CD14-positive monocyte (primary cell): ENCODE measurements at regions of chr9 and their contacts with region 1.

Region 1: GRCh38 chr9:116572095-116572748 is 114.9 kb upstream of the TRIM32 start:
- DNase-seq: peak; percentile 51 to 61 (median 53)
- H3K4me3 ChIP-seq: no peak overlapping the region
- H3K4me3 Mint-ChIP-seq: no peak overlapping the region
- H3K27ac ChIP-seq: no peak overlapping the region
- H3K27ac Mint-ChIP-seq: no peak overlapping the region
- H3K4me1 ChIP-seq: no peaks in the 10 kb centered on the region
- H3K4me1 Mint-ChIP-seq: no peaks in the 10 kb centered on the region
- H3K27me3 ChIP-seq: no peaks in the 10 kb centered on the region
- H3K27me3 Mint-ChIP-seq: peaks cover 0 to 2% (median 2%) of the 10 kb centered on the region in 3 donors
- CTCF ChIP-seq: peak; percentile 88

Region 2: DNA sequence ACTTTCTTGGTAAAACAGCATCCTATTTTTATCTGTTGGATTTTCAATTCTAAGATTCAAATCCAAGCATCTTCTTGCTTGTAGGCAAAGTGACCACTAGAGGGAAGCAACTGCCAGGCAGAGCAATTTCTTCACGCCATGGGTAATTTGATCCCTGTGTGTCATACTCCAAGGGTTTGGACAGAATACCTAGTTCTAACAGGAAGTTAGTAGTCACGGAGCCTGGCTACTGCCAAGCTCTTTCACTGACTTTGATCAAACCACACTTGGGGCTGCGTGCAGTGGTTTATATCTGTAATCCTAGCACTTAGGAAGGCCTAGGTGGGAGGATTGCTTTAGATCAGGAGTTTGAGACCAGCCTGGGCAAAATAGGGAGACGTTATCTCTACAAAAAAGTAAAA is 980.6 kb before region 1 on chr9:
- intact Hi-C with region 1: loop called in 1 of 2 experiments (anchors 5 kb)
- DNase-seq: no peak
- H3K4me3 ChIP-seq: no peak overlapping the region
- H3K4me3 Mint-ChIP-seq: no peak overlapping the region
- H3K27ac ChIP-seq: no peak overlapping the region
- H3K27ac Mint-ChIP-seq: peak overlapping the region in 1 of 7 donors; percentile 15
- H3K4me1 ChIP-seq: no peaks in the 10 kb centered on the region
- H3K4me1 Mint-ChIP-seq: no peaks in the 10 kb centered on the region
- H3K27me3 ChIP-seq: no peaks in the 10 kb centered on the region
- H3K27me3 Mint-ChIP-seq: peaks cover 2 to 5% (median 4%) of the 10 kb centered on the region in 3 donors
- CTCF ChIP-seq: peak; percentile 26

Region 3: DNA sequence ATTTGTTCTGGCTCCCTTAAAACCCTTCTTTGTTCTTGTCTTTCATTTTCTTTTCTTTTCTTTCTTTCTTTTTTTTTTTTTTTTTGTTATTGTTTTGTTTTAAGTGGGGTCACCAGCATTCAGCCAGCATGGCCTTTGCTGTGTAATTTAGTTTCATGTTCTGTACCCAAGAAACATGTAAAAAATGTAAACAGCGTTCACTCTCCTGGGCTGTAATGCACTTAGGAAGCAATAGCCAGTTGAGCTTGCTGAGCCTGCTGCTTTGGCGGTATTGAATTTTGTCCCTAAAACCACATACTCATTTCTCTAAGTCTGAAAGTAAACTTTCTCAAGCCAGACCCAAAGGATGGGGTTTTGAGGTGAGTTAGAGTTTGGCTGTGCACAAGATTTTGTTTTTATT is 260.0 kb before region 1 on chr9:
- intact Hi-C with region 1: no loop called
- DNase-seq: no peak
- H3K4me3 ChIP-seq: no peak overlapping the region
- H3K4me3 Mint-ChIP-seq: no peak overlapping the region
- H3K27ac ChIP-seq: no peak overlapping the region
- H3K27ac Mint-ChIP-seq: no peak overlapping the region
- H3K4me1 ChIP-seq: no peaks in the 10 kb centered on the region
- H3K4me1 Mint-ChIP-seq: no peaks in the 10 kb centered on the region
- H3K27me3 ChIP-seq: no peaks in the 10 kb centered on the region
- H3K27me3 Mint-ChIP-seq: peaks cover 0 to 4% (median 4%) of the 10 kb centered on the region in 3 donors
- CTCF ChIP-seq: no peak

Region 4: GRCh38 chr9:116484492-116485061 is 87.6 kb before region 1 on chr9:
- intact Hi-C with region 1: no loop called
- DNase-seq: no peak
- H3K4me3 ChIP-seq: no peak overlapping the region
- H3K4me3 Mint-ChIP-seq: no peak overlapping the region
- H3K27ac ChIP-seq: no peak overlapping the region
- H3K27ac Mint-ChIP-seq: no peak overlapping the region
- H3K4me1 ChIP-seq: no peaks in the 10 kb centered on the region
- H3K4me1 Mint-ChIP-seq: no peaks in the 10 kb centered on the region
- H3K27me3 ChIP-seq: no peaks in the 10 kb centered on the region
- H3K27me3 Mint-ChIP-seq: peaks cover 0 to 2% (median 0%) of the 10 kb centered on the region in 3 donors
- CTCF ChIP-seq: no peak

Region 5: GRCh38 chr9:116494815-116495634 is 77.2 kb before region 1 on chr9:
- intact Hi-C with region 1: loop called in 1 of 2 experiments (anchors 10 kb)
- DNase-seq: peak in 2 of 3 donors; percentile 4 to 24
- H3K4me3 ChIP-seq: no peak overlapping the region
- H3K4me3 Mint-ChIP-seq: no peak overlapping the region
- H3K27ac ChIP-seq: no peak overlapping the region
- H3K27ac Mint-ChIP-seq: no peak overlapping the region
- H3K4me1 ChIP-seq: no peaks in the 10 kb centered on the region
- H3K4me1 Mint-ChIP-seq: no peaks in the 10 kb centered on the region
- H3K27me3 ChIP-seq: no peaks in the 10 kb centered on the region
- H3K27me3 Mint-ChIP-seq: peaks cover 4 to 9% (median 8%) of the 10 kb centered on the region in 3 donors
- CTCF ChIP-seq: peak; percentile 84

Region 6: DNA sequence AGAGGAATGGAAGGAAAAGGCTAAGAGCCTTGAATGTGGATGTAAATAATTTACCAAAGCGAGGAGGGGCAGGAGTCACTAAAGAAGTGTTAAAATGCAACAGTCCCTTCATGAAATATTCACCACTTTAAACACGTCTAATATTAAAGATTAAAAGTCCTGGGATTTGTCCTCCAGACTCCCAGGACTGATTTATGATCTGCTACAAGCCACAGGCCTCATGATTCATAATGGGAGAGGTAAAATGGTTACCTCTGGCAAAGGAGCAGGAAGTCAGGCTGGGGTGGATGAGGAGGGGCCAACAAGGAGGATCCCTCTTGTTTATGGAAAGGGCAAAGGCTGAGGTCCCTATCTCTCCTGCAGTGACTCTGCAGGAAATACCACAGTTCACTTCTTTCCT is 407.2 kb after region 1 on chr9:
- intact Hi-C with region 1: no loop called
- DNase-seq: no peak
- H3K4me3 ChIP-seq: no peak overlapping the region
- H3K4me3 Mint-ChIP-seq: peak overlapping the region in 1 of 2 donors; percentile 0
- H3K27ac ChIP-seq: no peak overlapping the region
- H3K27ac Mint-ChIP-seq: no peak overlapping the region
- H3K4me1 ChIP-seq: peaks cover 0 to 4% of the 10 kb centered on the region in 2 donors
- H3K4me1 Mint-ChIP-seq: peaks cover 4% of the 10 kb centered on the region
- H3K27me3 ChIP-seq: no peaks in the 10 kb centered on the region
- H3K27me3 Mint-ChIP-seq: peaks cover 0 to 2% (median 0%) of the 10 kb centered on the region in 3 donors
- CTCF ChIP-seq: no peak

Region 7: GRCh38 chr9:117399844-117400561 is 827.8 kb after region 1 on chr9:
- intact Hi-C with region 1: no loop called
- DNase-seq: no peak
- H3K4me3 ChIP-seq: no peak overlapping the region
- H3K4me3 Mint-ChIP-seq: no peak overlapping the region
- H3K27ac ChIP-seq: no peak overlapping the region
- H3K27ac Mint-ChIP-seq: peak overlapping the region in 1 of 7 donors; percentile 9
- H3K4me1 ChIP-seq: no peaks in the 10 kb centered on the region
- H3K4me1 Mint-ChIP-seq: no peaks in the 10 kb centered on the region
- H3K27me3 ChIP-seq: no peaks in the 10 kb centered on the region
- H3K27me3 Mint-ChIP-seq: peaks cover 9 to 12% (median 11%) of the 10 kb centered on the region in 3 donors
- CTCF ChIP-seq: no peak